ENCODE measurements at regions of chr9 and their contacts with region 1.

Region 1: DNA sequence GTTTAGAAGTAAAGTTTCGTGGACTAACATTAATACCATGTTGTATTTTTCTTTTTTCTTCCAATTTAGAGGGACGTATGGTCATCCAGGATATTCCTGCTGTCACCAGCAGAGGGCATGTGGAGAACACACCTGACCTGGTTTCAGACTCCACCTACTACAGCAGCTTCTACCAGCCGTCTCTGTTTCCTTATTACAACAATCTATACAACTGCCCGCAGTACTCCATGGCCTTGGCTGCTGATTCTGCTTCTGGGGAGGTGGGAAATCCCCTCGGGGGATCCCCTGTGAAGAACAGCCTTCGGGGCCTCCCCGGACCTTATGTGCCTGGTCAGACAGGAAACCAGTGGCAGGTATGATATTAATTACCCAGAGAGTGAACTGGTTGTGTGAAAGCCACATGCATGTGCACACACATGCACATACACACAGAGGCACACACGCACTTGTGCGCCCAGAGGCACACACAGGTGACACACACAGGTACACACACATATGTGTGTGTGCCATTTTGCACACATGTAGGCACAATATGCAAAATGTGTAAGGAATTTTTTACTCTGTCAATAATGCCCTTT is 52.4 kb downstream of the DMRT1 start:
- DNase-seq: no peak
- H3K4me3 ChIP-seq: no peak overlapping the region
- H3K27ac ChIP-seq: no peak overlapping the region
- H3K4me1 ChIP-seq: no peaks in the 10 kb centered on the region
- H3K27me3 ChIP-seq: peaks cover 60% of the 10 kb centered on the region
- CTCF ChIP-seq: peak; percentile 80

Region 2: GRCh38 chr9:1009101-1009707 is 115.3 kb after region 1 on chr9:
- intact Hi-C with region 1: loop called (anchors 10 kb)
- DNase-seq: peak; percentile 80
- H3K4me3 ChIP-seq: no peak overlapping the region
- H3K27ac ChIP-seq: no peak overlapping the region
- H3K4me1 ChIP-seq: no peaks in the 10 kb centered on the region
- H3K27me3 ChIP-seq: peaks cover 73% of the 10 kb centered on the region
- CTCF ChIP-seq: peak; percentile 99